Heart left ventricle (tissue), 16 donors: ENCODE measurements at regions of chr18 and their contacts with region 1.

Region 1: GRCh38 chr18:49048396-49049020 is 97.7 kb upstream of the SMAD7 start:
- DNase-seq: no peak
- ATAC-seq: no peak
- H3K4me3 ChIP-seq: no peak overlapping the region
- H3K27ac ChIP-seq: no peak overlapping the region
- H3K4me1 ChIP-seq: peaks cover 0 to 19% (median 12%) of the 10 kb centered on the region in 12 donors
- H3K27me3 ChIP-seq: no peaks in the 10 kb centered on the region
- CTCF ChIP-seq: no peak
- POLR2A ChIP-seq: no peak

Region 2: GRCh38 chr18:48460929-48461583 is 587.5 kb before region 1 on chr18:
- intact Hi-C with region 1: no loop called
- DNase-seq: no peak
- ATAC-seq: no peak
- H3K4me3 ChIP-seq: no peak overlapping the region
- H3K27ac ChIP-seq: no peak overlapping the region
- H3K4me1 ChIP-seq: peaks cover 0 to 9% (median 0%) of the 10 kb centered on the region in 12 donors
- H3K27me3 ChIP-seq: no peaks in the 10 kb centered on the region
- CTCF ChIP-seq: no peak
- POLR2A ChIP-seq: no peak

Region 3: DNA sequence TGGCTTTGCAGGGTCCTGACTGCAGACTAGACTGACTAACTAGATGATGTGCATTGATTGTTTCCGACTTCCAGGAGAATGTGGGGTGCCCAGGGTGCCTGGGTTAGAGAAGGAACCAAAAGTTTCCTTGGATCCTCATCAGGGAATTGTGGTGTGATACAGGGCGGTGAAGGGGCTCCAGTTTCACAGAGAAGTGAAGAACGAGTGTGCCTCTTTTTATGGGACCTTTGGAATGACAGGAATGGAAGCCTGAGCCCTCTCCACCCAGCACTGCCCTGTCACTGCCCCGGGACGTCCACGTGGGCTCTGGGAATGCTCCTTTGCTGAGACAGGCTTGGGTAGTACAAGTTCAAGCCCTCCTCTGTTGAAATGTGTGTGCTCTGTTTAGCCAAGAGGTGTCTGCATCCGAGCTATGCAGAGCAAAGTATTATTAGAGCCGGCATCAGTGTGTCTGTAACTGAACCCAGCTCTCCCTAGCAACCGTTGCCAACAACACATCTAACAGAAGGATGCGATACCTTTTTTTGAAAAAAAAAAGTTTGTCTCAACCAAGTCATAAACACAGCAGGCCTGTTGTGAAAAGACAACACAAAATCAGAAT is 281.3 kb before region 1 on chr18:
- intact Hi-C with region 1: loop called in 2 of 10 experiments (anchors 5 to 10 kb)
- DNase-seq: peak in 4 of 5 donors; percentile 63 to 77 (median 70)
- ATAC-seq: peak; percentile 86 to 92 (median 90)
- H3K4me3 ChIP-seq: no peak overlapping the region
- H3K27ac ChIP-seq: peak overlapping the region; percentile 12 to 95 (median 79)
- H3K4me1 ChIP-seq: peaks cover 0 to 93% (median 45%) of the 10 kb centered on the region in 12 donors
- H3K27me3 ChIP-seq: no peaks in the 10 kb centered on the region
- CTCF ChIP-seq: no peak
- POLR2A ChIP-seq: no peak

Region 4: GRCh38 chr18:49135877-49136276 is 87.4 kb after region 1 on chr18:
- intact Hi-C with region 1: no loop called
- DNase-seq: no peak
- ATAC-seq: no peak
- H3K4me3 ChIP-seq: no peak overlapping the region
- H3K27ac ChIP-seq: no peak overlapping the region
- H3K4me1 ChIP-seq: peaks cover 0 to 10% (median 1%) of the 10 kb centered on the region in 12 donors
- H3K27me3 ChIP-seq: no peaks in the 10 kb centered on the region
- CTCF ChIP-seq: no peak
- POLR2A ChIP-seq: no peak